IMR-90 (cell line): ENCODE measurements at regions of chr10 and their contacts with region 1.

Region 1: GRCh38 chr10:88783724-88784123 is 18.8 kb upstream of the LIPM start:
- DNase-seq: peak; percentile 41
- ATAC-seq: no peak
- H3K4me3 ChIP-seq: no peak overlapping the region
- H3K27ac ChIP-seq: no peak overlapping the region
- H3K4me1 ChIP-seq: no peaks in the 10 kb centered on the region
- H3K27me3 ChIP-seq: peaks cover 1% of the 10 kb centered on the region; the same call in 1 of the 2 replicates
- CTCF ChIP-seq: no peak
- POLR2A ChIP-seq: no peak
- RAD21 ChIP-seq: no peak

Region 2: GRCh38 chr10:88707429-88708285 is 76.1 kb before region 1 on chr10:
- CTCF ChIA-PET with region 1: no interaction called
- POLR2A ChIA-PET with region 1: no interaction called
- dilution Hi-C with region 1: no loop called
- in situ Hi-C with region 1: no loop called
- intact Hi-C with region 1: loop called (anchors 5 kb)
- DNase-seq: peak; percentile 81
- ATAC-seq: peak; percentile 81
- H3K4me3 ChIP-seq: no peak overlapping the region
- H3K27ac ChIP-seq: no peak overlapping the region
- H3K4me1 ChIP-seq: no peaks in the 10 kb centered on the region
- H3K27me3 ChIP-seq: peaks cover 2% of the 10 kb centered on the region; the same call in 1 of the 2 replicates
- CTCF ChIP-seq: no peak
- POLR2A ChIP-seq: no peak
- RAD21 ChIP-seq: no peak